Body of pancreas (tissue), 4 donors: ENCODE measurements at regions of chr1 and their contacts with region 1.

Region 1: GRCh38 chr1:203878422-203878821 is 17.0 kb downstream of the SNRPE start:
- DNase-seq: no peak
- ATAC-seq: no peak
- H3K4me3 ChIP-seq: no peak overlapping the region
- H3K27ac ChIP-seq: no peak overlapping the region
- H3K4me1 ChIP-seq: no peaks in the 10 kb centered on the region
- H3K27me3 ChIP-seq: no peaks in the 10 kb centered on the region
- CTCF ChIP-seq: no peak
- POLR2A ChIP-seq: no peak

Region 2: GRCh38 chr1:204123376-204123775 is 245.0 kb after region 1 on chr1:
- intact Hi-C with region 1: loop called (anchors 5 kb)
- DNase-seq: peak in 1 of 4 donors; percentile 35
- ATAC-seq: no peak
- H3K4me3 ChIP-seq: no peak overlapping the region
- H3K27ac ChIP-seq: no peak overlapping the region
- H3K4me1 ChIP-seq: peaks cover 14% of the 10 kb centered on the region
- H3K27me3 ChIP-seq: no peaks in the 10 kb centered on the region
- CTCF ChIP-seq: peak; percentile 17 to 45 (median 20)
- POLR2A ChIP-seq: no peak